Activated CD4-positive, alpha-beta T cell treated with anti-CD3 and anti-CD28 coated beads for 36 hours (primary cell): ENCODE measurements at regions of chr15 and their contacts with region 1.

Region 1: DNA sequence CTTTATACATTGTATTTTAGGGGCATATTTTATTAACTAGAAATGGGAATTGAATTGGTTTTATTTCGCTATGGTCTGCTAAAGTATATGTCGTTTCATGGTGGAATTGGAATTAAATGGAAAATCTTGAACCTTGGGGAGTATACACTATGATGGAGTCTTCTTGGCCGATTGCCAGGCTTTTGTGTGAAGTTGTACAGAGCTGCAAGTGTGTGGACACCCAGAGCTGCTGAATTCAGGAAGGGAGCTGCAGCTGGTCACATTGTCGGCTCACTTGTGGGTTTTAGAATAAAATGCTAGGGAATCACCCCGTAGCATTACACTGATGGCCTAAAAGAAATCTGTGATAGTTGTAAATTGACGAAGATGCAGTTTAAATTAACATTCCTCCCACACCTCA is 35.1 kb downstream of the USP3 start:
- DNase-seq: no peak
- ATAC-seq: no peak
- H3K4me3 Mint-ChIP-seq: no peak overlapping the region
- H3K27ac Mint-ChIP-seq: no peak overlapping the region
- H3K4me1 Mint-ChIP-seq: peaks cover 60% of the 10 kb centered on the region
- H3K27me3 Mint-ChIP-seq: no peaks in the 10 kb centered on the region

Region 2: DNA sequence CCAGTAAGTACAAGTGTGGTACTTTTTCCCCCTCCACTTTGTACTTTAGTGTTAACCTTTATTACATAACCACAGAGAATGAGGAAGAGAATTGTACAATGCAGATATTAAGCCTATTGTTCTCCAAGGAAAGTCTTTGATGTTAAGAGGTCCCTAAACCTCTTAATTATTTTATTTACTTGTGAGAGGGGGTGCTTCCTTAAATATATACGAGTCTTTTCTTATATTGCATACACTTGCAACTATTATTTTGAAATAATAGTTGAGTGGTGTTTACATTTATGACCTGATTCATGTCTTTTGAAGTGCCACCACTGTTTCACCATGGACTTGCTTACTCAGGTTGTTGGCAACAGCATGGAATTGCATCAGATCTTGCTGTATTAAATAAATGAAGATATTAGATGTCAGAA is 25.0 kb before region 1 on chr15:
- CTCF ChIA-PET with region 1: interaction called, 10 read pairs
- POLR2A ChIA-PET with region 1: no interaction called
- intact Hi-C with region 1: no loop called
- DNase-seq: no peak
- ATAC-seq: no peak
- H3K4me3 Mint-ChIP-seq: peak overlapping the region; percentile 42
- H3K27ac Mint-ChIP-seq: peak overlapping the region; percentile 64
- H3K4me1 Mint-ChIP-seq: peaks cover 91% of the 10 kb centered on the region
- H3K27me3 Mint-ChIP-seq: no peaks in the 10 kb centered on the region

Region 3: DNA sequence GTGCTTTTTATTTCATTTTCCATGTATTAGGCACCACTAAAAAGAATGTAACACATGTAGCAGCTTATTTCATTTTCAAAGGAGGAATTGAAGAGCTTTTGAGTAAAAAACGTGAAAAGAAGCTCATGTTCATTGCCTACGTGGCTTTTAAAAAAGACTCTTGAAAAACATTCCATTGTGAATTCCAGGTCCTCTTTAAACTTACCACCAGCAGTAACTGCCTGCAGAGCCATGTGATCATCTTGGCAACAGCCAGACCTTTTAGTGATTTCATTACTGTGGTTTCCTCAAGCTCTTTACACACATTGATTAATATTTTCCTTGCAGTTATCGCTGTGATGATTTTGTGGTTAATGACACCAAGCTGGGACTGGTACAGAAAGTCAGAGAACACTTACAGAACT is 13.9 kb after region 1 on chr15:
- CTCF ChIA-PET with region 1: interaction called, 21 read pairs
- POLR2A ChIA-PET with region 1: no interaction called
- intact Hi-C with region 1: no loop called
- DNase-seq: peak; percentile 30
- ATAC-seq: peak; percentile 72
- H3K4me3 Mint-ChIP-seq: peak overlapping the region; percentile 35
- H3K27ac Mint-ChIP-seq: peak overlapping the region; percentile 51
- H3K4me1 Mint-ChIP-seq: peaks cover 50% of the 10 kb centered on the region
- H3K27me3 Mint-ChIP-seq: no peaks in the 10 kb centered on the region

Region 4: GRCh38 chr15:63729115-63729884 is 189.8 kb after region 1 on chr15:
- CTCF ChIA-PET with region 1: no interaction called
- POLR2A ChIA-PET with region 1: no interaction called
- intact Hi-C with region 1: no loop called
- DNase-seq: peak; percentile 60
- ATAC-seq: peak; percentile 85
- H3K4me3 Mint-ChIP-seq: no peak overlapping the region
- H3K27ac Mint-ChIP-seq: peak overlapping the region; percentile 61
- H3K4me1 Mint-ChIP-seq: peaks cover 20% of the 10 kb centered on the region
- H3K27me3 Mint-ChIP-seq: no peaks in the 10 kb centered on the region

Region 5: GRCh38 chr15:63752075-63752684 is 212.7 kb after region 1 on chr15:
- CTCF ChIA-PET with region 1: no interaction called
- POLR2A ChIA-PET with region 1: no interaction called
- intact Hi-C with region 1: no loop called
- DNase-seq: peak; percentile 52
- ATAC-seq: peak; percentile 92
- H3K4me3 Mint-ChIP-seq: no peak overlapping the region
- H3K27ac Mint-ChIP-seq: no peak overlapping the region
- H3K4me1 Mint-ChIP-seq: peaks cover 4% of the 10 kb centered on the region
- H3K27me3 Mint-ChIP-seq: no peaks in the 10 kb centered on the region